AG04449 (cell line): ENCODE measurements at regions of chr9 and their contacts with region 1.

Region 1: DNA sequence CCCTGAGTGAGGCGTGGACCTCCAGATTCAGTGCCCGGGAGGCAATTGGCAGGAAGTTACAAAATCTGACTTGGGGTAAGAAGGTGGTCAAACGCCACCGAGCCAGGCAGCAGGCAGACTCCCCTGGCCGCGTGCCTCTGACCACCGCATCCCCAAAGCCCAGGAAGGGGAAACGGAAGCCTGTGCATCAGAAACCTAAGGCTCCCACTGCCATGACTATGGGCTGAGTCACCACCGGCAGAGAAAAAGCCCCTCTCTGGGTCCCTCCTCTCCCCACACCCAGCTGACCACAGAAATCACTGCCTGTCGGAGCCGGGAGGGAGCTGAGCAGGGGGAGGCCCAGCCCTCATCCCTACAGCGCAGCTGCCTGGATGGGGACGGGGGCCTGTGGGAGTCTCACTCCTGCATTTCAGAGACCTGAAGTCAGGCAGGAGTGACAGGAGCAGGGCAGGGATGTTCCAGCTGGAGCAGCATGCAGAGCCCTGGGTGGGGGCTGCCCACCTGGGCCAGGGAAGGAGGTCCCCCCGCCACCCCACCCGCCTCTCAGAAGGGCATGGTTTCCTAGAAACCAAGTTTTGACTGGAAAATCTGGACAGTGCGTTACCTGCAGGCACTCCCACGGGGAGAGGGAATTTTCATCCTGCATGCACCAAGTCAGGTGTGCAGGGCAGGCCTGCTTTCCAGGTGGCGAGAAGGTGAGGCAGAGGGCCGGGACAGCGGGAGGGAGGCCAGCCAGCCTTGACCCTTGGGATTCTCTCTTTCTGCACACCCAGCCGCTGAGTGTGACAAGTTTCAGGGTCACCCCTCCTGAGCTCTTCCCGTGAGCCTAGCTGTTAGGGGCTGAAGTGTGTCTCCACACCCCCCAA is 68.2 kb downstream of the LRSAM1 start:
- DNase-seq: peak; percentile 81
- H3K4me3 ChIP-seq: no peak overlapping the region
- CTCF ChIP-seq: no peak

Region 2: DNA sequence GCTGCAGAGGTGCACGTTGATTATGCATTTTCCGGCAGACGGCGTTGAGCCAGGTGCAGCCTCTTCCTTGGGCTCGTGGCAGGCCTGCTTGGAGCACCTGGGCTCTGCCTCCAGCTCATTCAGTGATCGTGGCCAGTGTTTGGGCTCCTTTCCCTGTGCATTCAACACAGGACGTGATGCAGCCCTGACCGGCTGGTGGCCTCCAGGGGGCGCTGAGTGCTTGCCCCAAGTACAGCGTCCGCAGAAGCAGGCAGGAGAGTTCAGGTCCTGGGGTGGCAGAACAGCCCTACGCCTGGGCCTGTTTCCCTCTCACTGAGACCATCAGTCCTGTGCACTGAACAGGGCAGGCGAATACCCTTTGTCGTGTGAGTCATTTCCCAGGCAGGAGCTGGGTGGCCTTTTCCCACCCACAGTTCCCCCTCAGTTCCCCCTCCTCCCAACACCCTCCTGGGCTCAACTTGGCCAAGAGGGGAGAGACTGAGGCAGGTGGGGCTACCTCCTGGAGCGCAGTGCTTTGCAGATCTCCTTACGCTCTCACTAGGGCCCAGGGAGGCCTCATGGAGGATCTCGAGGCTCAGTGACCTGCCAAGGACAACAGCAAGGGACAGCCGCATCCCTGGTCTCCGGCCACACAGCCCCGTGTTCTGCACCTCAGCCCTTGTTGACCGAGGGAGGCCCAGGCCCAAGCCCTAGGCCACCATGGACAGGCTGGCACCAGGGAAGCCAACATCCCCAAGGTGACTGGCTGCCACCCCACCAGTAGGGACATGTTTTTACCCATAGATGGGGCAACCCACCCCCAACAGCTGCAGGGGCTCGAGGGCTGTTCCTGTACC is 15.4 kb before region 1 on chr9:
- CTCF ChIA-PET with region 1: interaction called, 48 read pairs
- POLR2A ChIA-PET with region 1: interaction called, 3 read pairs
- DNase-seq: no peak
- H3K4me3 ChIP-seq: no peak overlapping the region
- CTCF ChIP-seq: peak; percentile 95

Region 3: DNA sequence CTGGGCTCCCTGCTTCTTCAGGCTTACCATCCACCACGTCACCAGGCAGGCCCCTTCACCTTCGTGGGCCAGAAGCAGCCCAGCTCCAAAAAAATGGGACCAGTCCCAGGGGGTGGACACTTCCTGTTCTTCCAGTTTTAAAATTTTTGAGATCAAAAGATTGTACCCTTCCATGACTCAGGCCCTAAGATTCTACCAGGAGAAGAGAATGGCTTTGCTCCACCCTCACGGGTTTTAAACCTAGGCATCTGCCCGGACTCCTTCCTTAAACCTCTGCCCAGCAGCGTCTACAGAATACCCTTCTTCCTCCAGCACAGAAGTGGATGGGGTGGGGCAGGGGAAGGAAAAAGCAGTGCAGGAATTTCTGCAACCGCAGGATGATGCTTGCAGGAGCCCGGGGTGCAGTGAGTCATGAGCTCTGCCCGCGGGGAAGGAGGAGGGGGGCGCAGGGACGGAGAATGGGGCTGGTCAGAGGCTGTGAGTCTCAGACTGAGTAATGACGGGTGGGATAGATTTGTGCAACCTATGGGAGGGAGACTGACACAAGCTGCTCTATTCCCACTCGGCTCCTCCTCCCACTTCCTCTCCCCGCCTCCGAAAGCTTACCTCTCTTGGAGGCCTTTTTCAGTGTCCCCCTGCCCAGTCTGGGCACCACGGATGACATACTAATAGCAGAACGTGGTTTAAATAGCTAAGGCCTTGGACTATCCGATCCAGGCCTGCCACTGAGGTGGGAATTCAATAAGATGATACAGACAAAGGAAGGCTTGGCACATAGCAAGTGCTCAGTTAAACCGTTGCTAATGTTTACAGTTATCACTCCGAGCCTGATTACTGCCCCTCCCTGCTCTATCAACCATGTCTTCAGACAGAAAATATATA is 42.3 kb after region 1 on chr9:
- CTCF ChIA-PET with region 1: interaction called, 10 read pairs
- POLR2A ChIA-PET with region 1: interaction called, 18 read pairs
- DNase-seq: peak; percentile 92
- H3K4me3 ChIP-seq: peak overlapping the region; percentile 18
- CTCF ChIP-seq: no peak

Region 4: DNA sequence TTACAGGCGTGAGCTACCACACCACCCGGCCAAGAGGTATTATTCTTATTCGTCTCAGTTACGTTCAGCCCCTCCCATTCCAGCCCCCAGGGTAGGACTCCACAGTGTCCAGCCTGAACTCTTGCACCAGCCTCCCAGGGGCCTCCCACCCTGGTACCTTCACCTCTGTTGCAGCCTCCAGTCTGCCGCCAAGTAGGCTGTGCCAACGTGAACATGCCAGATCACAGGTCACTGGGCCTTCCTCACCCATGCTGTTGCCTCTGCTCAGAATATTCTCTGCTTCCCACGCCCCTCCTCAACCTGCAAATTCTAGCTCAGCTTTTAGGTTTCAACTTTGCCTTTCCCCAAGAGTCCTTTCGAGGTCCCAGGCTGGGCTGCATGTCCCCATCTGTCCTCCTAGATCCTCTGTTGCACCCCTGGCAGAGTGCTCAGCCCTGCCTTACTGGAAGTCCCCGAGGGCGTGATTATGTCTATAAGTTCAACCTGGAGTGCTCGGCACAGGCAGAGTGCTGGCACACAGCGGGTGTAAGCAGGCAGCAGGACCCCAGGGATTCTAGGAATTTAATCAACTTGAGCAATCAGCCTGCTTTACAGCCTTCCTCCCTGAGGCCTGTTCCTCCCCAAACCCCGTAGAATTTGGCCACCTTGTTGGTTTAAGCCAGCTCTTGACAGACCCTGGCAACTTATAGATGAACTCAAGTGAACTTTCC is 79.5 kb after region 1 on chr9:
- CTCF ChIA-PET with region 1: no interaction called
- POLR2A ChIA-PET with region 1: no interaction called
- DNase-seq: no peak
- H3K4me3 ChIP-seq: no peak overlapping the region
- CTCF ChIP-seq: no peak